ENCODE measurements at regions of chr10 and their contacts with region 1.

Region 1: GRCh38 chr10:33365871-33366411 is 31.5 kb upstream of the NRP1 start:
- DNase-seq: no peak
- H3K4me3 Mint-ChIP-seq: no peak overlapping the region
- H3K27ac Mint-ChIP-seq: peak overlapping the region; percentile 83
- H3K4me1 Mint-ChIP-seq: peaks cover 29% of the 10 kb centered on the region
- H3K27me3 Mint-ChIP-seq: no peaks in the 10 kb centered on the region

Region 2: GRCh38 chr10:33115738-33116719 is 249.9 kb before region 1 on chr10:
- intact Hi-C with region 1: loop called (anchors 5 kb)
- DNase-seq: no peak
- H3K4me3 Mint-ChIP-seq: peak overlapping the region; percentile 9
- H3K27ac Mint-ChIP-seq: peak overlapping the region; percentile 71
- H3K4me1 Mint-ChIP-seq: peaks cover 76% of the 10 kb centered on the region
- H3K27me3 Mint-ChIP-seq: no peaks in the 10 kb centered on the region

Region 3: GRCh38 chr10:33265621-33266020 is 100.3 kb before region 1 on chr10:
- intact Hi-C with region 1: loop called (anchors 2 kb)
- DNase-seq: peak; percentile 14
- H3K4me3 Mint-ChIP-seq: no peak overlapping the region
- H3K27ac Mint-ChIP-seq: no peak overlapping the region
- H3K4me1 Mint-ChIP-seq: peaks cover 22% of the 10 kb centered on the region
- H3K27me3 Mint-ChIP-seq: peaks cover 37% of the 10 kb centered on the region

Region 4: GRCh38 chr10:33330543-33331378 is 35.2 kb before region 1 on chr10:
- intact Hi-C with region 1: loop called (anchors 1 kb)
- DNase-seq: peak; percentile 59
- H3K4me3 Mint-ChIP-seq: peak overlapping the region; percentile 14
- H3K27ac Mint-ChIP-seq: no peak overlapping the region
- H3K4me1 Mint-ChIP-seq: peaks cover 28% of the 10 kb centered on the region
- H3K27me3 Mint-ChIP-seq: peaks cover 48% of the 10 kb centered on the region

Region 5: DNA sequence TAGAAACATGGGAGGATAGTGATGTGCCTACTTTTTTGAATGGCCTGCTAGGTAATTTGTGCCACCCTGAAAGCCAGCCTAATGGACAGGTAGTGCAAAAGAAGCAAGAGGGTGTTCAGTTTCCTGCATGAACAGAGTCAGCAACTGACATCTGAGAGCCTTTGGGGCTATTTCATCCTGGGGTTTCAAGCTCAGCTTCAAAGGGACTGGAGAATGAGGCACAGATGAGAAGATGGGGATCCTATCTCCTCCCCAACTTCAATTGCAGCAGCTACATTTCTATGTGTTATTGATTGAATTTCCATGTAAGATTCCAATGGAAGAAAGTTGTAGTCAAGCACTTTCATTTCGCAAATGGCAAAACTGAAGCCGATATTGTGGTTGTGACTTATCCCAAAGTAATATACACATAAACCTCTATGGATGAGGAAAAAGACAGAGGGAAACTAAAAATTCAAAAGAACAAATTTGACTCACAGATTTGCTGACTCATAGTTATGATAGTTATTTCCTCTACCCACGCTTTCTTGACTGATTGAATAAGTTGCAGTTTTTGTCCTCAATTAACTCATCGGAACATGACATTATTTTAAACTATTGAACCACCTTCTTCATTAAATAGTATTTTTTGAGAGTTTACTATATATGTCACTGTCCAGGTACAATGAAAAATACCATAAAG is 11.2 kb after region 1 on chr10:
- intact Hi-C with region 1: loop called (anchors 1 kb)
- DNase-seq: no peak
- H3K4me3 Mint-ChIP-seq: no peak overlapping the region
- H3K27ac Mint-ChIP-seq: peak overlapping the region; percentile 39
- H3K4me1 Mint-ChIP-seq: peaks cover 28% of the 10 kb centered on the region
- H3K27me3 Mint-ChIP-seq: peaks cover 6% of the 10 kb centered on the region

Region 6: DNA sequence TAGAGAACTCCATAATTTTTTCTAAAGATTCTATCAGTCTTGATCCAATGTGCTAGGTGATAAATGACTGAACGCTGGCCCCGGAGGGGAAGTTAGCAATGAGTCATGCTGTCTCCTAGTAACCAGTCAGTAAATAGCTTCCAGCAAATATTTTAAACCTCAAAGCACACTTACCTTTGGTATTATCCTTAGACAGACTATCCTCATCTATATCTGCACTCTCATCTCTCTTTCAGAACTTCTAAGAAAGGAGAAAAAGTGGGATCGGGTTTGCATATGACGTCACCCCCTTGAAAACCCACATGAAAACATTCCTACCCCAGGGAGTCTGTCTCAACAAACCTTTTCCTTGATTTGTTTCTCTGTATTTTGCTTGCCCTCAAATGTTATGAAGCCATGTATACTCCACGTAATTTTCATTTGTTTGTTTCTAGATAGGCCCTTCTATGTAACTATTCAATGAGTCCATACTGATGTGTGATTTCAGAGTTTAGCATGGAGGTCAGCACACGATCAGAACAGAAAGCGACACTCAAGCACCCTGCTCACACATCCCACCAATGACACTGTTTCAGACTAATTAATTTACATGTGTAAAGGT is 143.4 kb after region 1 on chr10:
- intact Hi-C with region 1: loop called (anchors 5 kb)
- DNase-seq: no peak
- H3K4me3 Mint-ChIP-seq: no peak overlapping the region
- H3K27ac Mint-ChIP-seq: no peak overlapping the region
- H3K4me1 Mint-ChIP-seq: peaks cover 10% of the 10 kb centered on the region
- H3K27me3 Mint-ChIP-seq: peaks cover 4% of the 10 kb centered on the region

Region 7: DNA sequence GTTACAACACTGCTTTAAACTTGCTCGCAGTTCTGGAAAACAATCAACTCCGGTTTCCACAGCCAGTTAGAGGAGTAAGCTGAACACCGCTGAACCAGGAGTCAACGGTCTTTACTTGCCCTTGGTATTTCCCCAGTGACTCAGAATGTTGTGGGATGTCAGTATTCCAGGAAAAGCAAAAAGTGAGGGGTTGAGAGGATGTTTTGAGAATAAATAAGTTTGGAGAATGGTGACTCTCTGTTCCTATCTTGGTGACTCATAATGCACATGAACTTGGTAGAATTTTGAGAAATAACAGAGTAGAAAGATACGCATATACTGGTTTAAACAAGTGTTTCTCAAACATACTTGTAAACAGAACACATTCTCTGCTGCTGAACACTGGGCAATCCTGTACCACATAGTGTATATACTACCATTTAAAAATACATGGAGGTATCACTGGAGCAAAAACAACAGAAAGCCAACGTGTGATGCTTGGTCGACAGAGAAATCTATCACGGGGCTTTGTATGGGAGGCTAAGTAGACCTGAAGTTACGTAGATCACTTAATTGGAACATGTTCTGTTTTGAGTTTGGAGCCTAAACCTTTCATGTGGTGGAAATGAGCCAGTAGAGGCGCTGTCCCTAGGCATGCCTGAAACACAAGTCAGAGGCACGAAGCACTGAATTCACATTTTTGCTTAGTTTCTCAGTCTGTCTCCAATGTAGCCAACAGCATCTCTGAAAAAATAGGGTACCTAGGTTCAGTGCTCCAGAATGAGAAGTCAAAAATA is 914.8 kb after region 1 on chr10:
- intact Hi-C with region 1: loop called (anchors 5 kb)
- DNase-seq: no peak
- H3K4me3 Mint-ChIP-seq: no peak overlapping the region
- H3K27ac Mint-ChIP-seq: no peak overlapping the region
- H3K4me1 Mint-ChIP-seq: peaks cover 8% of the 10 kb centered on the region
- H3K27me3 Mint-ChIP-seq: peaks cover 7% of the 10 kb centered on the region